ENCODE measurements at regions of chr14 and their contacts with region 1.

Region 1: GRCh38 chr14:64986578-64987571 is at the start of gene FNTB:
- DNase-seq: peak; percentile 97
- ATAC-seq: peak; percentile 96
- H3K4me3 ChIP-seq: peak within 1 kb of the TSS; percentile 58
- H3K27ac ChIP-seq: peak within 1 kb of the TSS; percentile 77
- H3K4me1 ChIP-seq: 0 out of 2 replicates have a peak, but pooled peaks cover 1% of the 10 kb centered on the region
- H3K27me3 ChIP-seq: peaks cover 2% of the 10 kb centered on the region; the same call in 1 of the 2 replicates
- CTCF ChIP-seq: peak; percentile 98
- POLR2A ChIP-seq: peak; percentile 21; the same call in 1 of the 2 replicates
- RAD21 ChIP-seq: peak; percentile 91
- total RNA-seq, gene FNTB: 8.1 and 9.9 TPM in 2 replicates

Region 2: DNA sequence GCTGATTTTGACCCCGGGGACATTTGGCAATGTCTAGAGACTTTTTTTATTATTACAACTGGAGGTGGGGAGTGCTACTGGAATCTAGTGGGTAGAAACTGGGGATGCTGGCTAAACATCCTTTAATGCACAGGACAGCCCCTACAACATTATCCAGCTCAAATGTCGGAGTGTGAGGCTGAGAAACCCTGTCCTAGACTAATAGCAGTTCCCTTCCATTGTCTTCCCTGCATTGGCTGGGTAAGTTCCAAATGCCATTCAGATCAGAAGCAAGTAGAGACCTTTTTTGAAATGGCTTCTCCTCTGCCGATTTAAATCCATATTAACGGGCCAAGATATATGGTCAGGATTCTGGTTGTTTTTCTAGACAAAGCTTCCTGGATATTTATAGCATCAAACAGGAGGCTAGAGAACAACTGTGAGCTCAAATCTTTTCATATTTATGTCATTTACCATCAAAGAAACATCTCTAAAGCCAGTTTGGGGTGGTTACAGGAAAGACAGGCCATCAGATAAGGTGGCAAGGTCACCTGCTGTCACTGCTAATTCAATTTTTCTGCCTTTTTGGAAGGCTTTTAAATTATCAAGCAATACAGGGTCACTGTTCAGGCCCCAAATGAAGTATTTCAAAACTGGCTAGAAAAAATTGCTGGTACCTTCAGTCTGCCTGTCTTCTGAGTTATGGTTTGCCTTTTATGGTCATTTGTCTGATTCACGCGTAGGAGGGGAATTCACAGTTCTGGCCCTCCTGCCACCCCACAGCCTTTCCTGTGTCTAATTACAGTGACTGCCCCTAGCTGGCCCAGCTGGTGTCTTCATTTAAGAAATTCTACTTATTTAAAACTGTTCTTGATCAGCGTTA is 541.7 kb before region 1 on chr14:
- CTCF ChIA-PET with region 1: no interaction called
- POLR2A ChIA-PET with region 1: no interaction called
- dilution Hi-C with region 1: no loop called
- in situ Hi-C with region 1: no loop called
- intact Hi-C with region 1: no loop called
- DNase-seq: peak; percentile 77
- ATAC-seq: peak; percentile 89
- H3K4me3 ChIP-seq: no peak overlapping the region
- H3K27ac ChIP-seq: peak overlapping the region; percentile 74
- H3K4me1 ChIP-seq: peaks cover 8% of the 10 kb centered on the region; the same call in 1 of the 2 replicates
- H3K27me3 ChIP-seq: no peaks in the 10 kb centered on the region
- CTCF ChIP-seq: no peak
- POLR2A ChIP-seq: no peak
- RAD21 ChIP-seq: no peak

Region 3: DNA sequence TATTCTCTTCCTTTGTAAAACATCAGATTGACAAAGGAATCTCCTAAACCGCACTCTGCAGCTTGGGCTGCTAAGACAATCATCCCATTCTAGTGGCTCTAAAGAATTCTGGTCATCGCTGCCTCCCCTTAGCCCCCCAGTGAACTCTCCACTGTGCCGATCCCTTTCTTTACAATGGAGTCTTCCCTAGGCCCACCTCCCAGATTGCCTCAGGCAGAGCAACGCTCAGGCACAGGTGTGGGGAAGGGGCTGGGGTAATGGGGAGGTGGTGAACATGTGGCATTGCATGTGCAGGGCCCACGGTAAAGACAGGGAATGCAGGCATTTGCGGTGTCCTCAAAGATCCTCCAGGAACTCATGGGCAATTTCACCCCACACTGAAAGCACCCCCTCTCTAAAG is 196.4 kb before region 1 on chr14:
- CTCF ChIA-PET with region 1: no interaction called
- POLR2A ChIA-PET with region 1: no interaction called
- dilution Hi-C with region 1: no loop called
- in situ Hi-C with region 1: no loop called
- intact Hi-C with region 1: no loop called
- DNase-seq: no peak
- ATAC-seq: no peak
- H3K4me3 ChIP-seq: no peak overlapping the region
- H3K27ac ChIP-seq: no peak overlapping the region
- H3K4me1 ChIP-seq: peaks cover 9% of the 10 kb centered on the region
- H3K27me3 ChIP-seq: peaks cover 13% of the 10 kb centered on the region
- CTCF ChIP-seq: no peak
- POLR2A ChIP-seq: no peak
- RAD21 ChIP-seq: no peak

Region 4: GRCh38 chr14:64823305-64823861 is 163.5 kb before region 1 on chr14:
- CTCF ChIA-PET with region 1: no interaction called
- POLR2A ChIA-PET with region 1: no interaction called
- dilution Hi-C with region 1: no loop called
- in situ Hi-C with region 1: no loop called
- intact Hi-C with region 1: loop called (anchors 1 kb)
- DNase-seq: peak; percentile 69
- ATAC-seq: peak; percentile 100
- H3K4me3 ChIP-seq: no peak overlapping the region
- H3K27ac ChIP-seq: no peak overlapping the region
- H3K4me1 ChIP-seq: no peaks in the 10 kb centered on the region; the same call in 1 of the 2 replicates
- H3K27me3 ChIP-seq: peaks cover 44% of the 10 kb centered on the region
- CTCF ChIP-seq: peak; percentile 77
- POLR2A ChIP-seq: no peak
- RAD21 ChIP-seq: peak; percentile 73

Region 5: DNA sequence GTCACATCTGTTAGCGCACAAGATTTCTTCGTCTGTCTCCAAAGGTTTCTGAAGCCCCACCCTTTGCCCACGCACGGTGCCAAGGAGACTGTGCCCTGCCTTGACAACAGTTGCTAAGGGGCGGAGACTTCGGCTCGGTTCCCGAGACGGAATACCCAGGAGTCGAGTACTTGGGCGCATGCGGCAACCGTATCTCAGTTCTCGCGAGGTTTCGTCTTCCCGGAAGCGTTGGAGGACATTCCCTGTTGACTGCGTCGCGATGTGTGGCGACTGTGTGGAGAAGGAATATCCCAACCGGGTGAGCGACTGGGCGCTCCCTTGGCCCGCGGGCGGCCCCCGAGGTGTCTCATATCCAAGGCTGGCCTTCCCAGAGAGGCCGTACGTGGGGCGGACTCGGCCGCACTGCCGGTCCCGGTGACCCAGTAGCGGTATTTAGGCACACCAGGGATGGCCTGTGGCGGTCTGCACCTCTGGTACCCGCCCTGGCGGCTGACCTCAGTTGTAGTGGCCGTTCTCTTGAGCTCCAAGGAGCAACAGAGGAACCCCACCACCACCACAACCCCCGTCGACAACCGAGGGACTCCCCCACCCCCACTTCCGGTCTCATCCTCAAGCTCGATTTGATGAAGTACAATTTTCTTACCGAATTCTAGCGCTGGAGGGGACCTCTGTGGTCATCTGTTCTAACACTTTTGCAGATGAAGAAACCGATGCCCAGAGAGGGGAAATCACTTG is 72.5 kb before region 1 on chr14 and contains the start of gene CHURC1:
- CTCF ChIA-PET with region 1: interaction called, 3 read pairs
- POLR2A ChIA-PET with region 1: no interaction called
- dilution Hi-C with region 1: no loop called
- in situ Hi-C with region 1: no loop called
- intact Hi-C with region 1: loop called (anchors 5 kb)
- DNase-seq: peak; percentile 96
- ATAC-seq: peak; percentile 97
- H3K4me3 ChIP-seq: peak within 1 kb of the TSS; percentile 74
- H3K27ac ChIP-seq: peak within 1 kb of the TSS; percentile 75
- H3K4me1 ChIP-seq: peaks cover 4% of the 10 kb centered on the region
- H3K27me3 ChIP-seq: no peaks in the 10 kb centered on the region; the same call in 1 of the 2 replicates
- CTCF ChIP-seq: no peak
- POLR2A ChIP-seq: peak; percentile 96
- RAD21 ChIP-seq: no peak
- total RNA-seq, gene CHURC1: 38.0 and 51.9 TPM in 2 replicates

Measured in IMR-90 (cell line).